ENCODE measurements at regions of chr2 and their contacts with region 1.

Region 1: DNA sequence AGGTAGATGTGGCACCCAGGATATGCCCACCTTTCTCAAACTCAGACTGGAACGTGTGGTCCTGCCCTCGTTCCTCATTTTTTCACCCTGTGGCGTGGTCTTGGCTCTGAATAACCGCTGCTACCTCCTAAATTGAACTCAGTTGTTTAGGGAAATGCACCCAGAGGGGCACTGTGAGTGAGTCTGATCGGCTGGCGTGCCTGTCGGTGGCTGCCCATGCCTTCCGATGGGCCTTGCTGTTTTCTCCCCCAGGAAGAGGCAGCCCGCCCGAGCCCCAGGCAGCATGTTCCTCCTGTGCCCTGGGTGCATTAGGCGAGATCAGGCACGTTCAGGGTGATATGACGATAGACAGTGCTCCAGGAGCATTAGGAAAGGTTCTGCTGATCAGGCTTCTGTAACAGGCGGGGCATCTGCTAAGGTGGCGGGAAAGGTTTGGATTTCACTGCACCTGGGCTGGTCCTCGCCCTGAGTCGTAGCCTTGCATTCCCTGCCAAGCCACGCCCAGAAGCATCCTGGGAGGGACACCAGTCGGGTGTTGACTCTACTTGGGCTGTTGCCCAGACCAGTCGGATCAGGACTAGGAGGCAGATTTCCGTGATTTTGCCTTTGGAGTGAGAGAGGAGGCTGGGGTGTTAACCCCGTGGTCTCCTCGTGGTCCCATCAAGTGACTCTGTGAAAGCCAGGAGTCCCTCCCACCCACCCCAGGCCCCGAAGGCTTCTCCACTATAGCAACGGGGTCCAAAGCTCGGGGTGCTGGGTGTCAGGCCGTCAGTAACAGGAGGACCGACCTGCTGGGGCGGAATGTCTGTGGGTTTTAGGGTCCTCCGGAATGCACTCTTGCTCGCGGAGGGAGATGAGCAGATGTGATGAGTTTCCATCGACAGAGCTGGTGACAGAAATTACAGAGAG is 75.1 kb downstream of the SH3BP4 start:
- DNase-seq: peak; percentile 98 to 99
- H3K4me3 ChIP-seq: peak overlapping the region; percentile 61
- H3K27ac ChIP-seq: peak overlapping the region; percentile 98
- H3K4me1 ChIP-seq: peaks cover 79% of the 10 kb centered on the region
- H3K27me3 ChIP-seq: no peaks in the 10 kb centered on the region
- CTCF ChIP-seq: no peak

Region 2: GRCh38 chr2:234823877-234824376 is 203.0 kb before region 1 on chr2:
- CTCF ChIA-PET with region 1: no interaction called
- POLR2A ChIA-PET with region 1: no interaction called
- intact Hi-C with region 1: loop called (anchors 1 kb)
- DNase-seq: peak; percentile 77 to 92
- H3K4me3 ChIP-seq: no peak overlapping the region
- H3K27ac ChIP-seq: peak overlapping the region; percentile 46; the same call in 1 of the 2 replicates
- H3K4me1 ChIP-seq: peaks cover 54% of the 10 kb centered on the region
- H3K27me3 ChIP-seq: no peaks in the 10 kb centered on the region
- CTCF ChIP-seq: no peak

Region 3: DNA sequence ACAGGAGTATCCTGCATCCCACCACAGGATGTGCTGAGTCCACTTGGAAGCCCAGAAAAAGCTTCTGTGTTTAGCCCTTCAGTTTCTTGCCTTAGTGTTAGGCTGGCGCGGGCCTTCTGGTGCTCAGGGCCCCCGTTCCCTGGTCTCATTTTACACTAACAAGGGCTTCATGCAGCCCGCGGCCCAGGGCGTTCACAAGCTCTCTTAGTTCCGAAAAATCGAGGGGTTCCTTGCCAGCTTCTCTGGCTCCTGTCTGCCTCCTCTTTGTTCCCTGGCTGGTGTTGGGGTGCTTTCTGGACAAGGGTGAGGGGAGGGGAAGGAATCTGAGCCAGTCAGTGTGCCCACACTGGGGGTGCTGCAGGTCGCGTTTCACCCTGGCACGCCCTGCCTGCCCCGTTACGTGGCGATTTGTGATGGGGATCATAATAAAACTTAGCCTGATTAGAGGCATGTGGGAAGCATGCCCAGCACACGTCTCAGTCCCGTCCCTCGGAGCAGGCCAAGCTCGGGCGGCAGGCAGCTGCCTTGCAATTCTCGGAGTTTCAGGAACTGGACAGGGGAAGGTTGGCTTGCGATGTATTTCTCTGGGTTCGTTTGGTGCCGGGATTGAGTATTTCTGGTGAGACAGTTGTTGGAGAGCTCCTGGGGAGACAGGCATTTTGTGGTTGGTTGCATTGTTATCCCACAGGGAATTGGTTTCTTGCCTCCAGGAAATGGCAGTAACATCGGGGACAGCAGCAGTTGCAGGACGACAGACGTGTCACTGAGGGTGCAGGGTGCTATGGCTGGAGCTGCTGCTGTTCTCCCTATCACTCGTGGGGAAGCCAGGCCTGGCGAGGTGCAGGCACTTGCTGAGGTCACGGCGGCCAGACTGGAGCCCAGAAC is 52.2 kb before region 1 on chr2:
- CTCF ChIA-PET with region 1: no interaction called
- POLR2A ChIA-PET with region 1: interaction called, 14 read pairs
- intact Hi-C with region 1: no loop called
- DNase-seq: no peak
- H3K4me3 ChIP-seq: no peak overlapping the region
- H3K27ac ChIP-seq: no peak overlapping the region
- H3K4me1 ChIP-seq: peaks cover 60% of the 10 kb centered on the region
- H3K27me3 ChIP-seq: no peaks in the 10 kb centered on the region
- CTCF ChIP-seq: no peak

Region 4: DNA sequence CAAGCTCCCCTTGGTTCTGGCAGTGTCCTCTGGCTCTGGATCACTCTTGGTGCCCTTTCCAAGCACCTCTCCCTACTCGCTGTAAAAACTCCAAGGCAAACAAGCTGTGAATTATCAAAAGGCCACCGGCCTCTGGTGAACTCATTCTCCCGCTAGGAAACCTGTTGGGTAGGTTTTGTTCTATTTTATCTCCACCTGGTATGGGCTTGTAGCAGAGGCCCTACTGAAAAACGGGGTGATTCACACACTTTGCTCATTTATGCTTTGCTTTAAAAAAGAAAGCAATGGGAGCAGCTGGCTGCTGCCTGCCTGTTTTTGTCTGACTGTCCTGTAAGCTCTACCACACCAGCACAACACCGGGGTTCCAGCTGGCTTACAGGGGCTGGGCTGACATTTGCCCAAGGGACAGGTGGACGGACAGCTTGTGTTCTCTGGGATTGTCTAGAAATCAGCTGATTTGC is 18.3 kb before region 1 on chr2:
- CTCF ChIA-PET with region 1: no interaction called
- POLR2A ChIA-PET with region 1: no interaction called
- intact Hi-C with region 1: loop called (anchors 1 kb)
- DNase-seq: peak; percentile 83 to 99
- H3K4me3 ChIP-seq: peak overlapping the region; percentile 36
- H3K27ac ChIP-seq: peak overlapping the region; percentile 89
- H3K4me1 ChIP-seq: peaks cover 65% of the 10 kb centered on the region
- H3K27me3 ChIP-seq: no peaks in the 10 kb centered on the region
- CTCF ChIP-seq: no peak

Region 5: GRCh38 chr2:235050992-235051351 is 24.1 kb after region 1 on chr2:
- CTCF ChIA-PET with region 1: interaction called, 11 read pairs
- POLR2A ChIA-PET with region 1: interaction called, 6 read pairs
- intact Hi-C with region 1: loop called (anchors 1 kb)
- DNase-seq: peak; percentile 89 to 97
- H3K4me3 ChIP-seq: no peak overlapping the region
- H3K27ac ChIP-seq: peak overlapping the region; percentile 74
- H3K4me1 ChIP-seq: peaks cover 57% of the 10 kb centered on the region
- H3K27me3 ChIP-seq: no peaks in the 10 kb centered on the region
- CTCF ChIP-seq: no peak; the same call in 1 of the 2 replicates

Region 6: GRCh38 chr2:235098736-235099494 is 72.0 kb after region 1 on chr2:
- CTCF ChIA-PET with region 1: no interaction called
- POLR2A ChIA-PET with region 1: no interaction called
- intact Hi-C with region 1: loop called (anchors 2 kb)
- DNase-seq: peak in 1 of 2 experiments; percentile 90
- H3K4me3 ChIP-seq: no peak overlapping the region
- H3K27ac ChIP-seq: peak overlapping the region; percentile 23
- H3K4me1 ChIP-seq: peaks cover 24% of the 10 kb centered on the region
- H3K27me3 ChIP-seq: no peaks in the 10 kb centered on the region
- CTCF ChIP-seq: no peak

Measured in PC-9 (cell line).